ENCODE measurements at regions of chr3 and their contacts with region 1.

Region 1: DNA sequence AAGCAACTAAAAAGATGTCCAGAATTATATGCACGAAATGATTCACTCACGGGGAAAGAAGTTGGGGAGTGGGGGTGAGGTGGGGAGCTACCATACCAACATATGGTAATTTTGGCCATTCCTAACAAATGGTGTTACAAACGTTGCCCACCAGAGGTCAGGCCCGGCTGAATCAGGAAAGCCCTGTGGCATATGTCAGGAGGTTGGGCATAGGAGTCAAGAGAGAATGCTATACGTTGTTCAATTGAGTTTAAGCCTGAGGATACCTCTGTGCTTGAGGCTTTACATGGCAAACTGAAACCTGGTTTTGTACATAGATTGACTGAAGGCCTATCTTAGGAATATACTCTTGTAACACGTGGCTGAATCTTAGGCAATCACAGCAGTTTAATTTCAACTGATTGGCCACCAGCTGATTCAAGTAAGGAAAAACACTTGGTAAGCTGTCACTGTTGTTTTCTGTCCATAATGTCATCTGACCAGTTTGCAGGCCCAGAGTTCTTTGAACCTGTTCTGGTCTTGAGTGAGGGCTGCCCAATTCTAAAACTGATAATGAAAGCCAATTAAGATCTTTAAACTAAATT is 23.4 kb upstream of the SLC2A2 start:
- DNase-seq: peak in 4 of 5 donors; percentile 16 to 40 (median 30)
- ATAC-seq: peak in 3 of 4 donors; percentile 68 to 83 (median 80)
- H3K4me3 ChIP-seq: no peak overlapping the region
- H3K27ac ChIP-seq: no peak overlapping the region
- H3K4me1 ChIP-seq: peaks cover 0 to 2% (median 0%) of the 10 kb centered on the region in 12 donors
- H3K27me3 ChIP-seq: no peaks in the 10 kb centered on the region
- CTCF ChIP-seq: peak; percentile 41 to 68 (median 55)
- POLR2A ChIP-seq: no peak

Region 2: GRCh38 chr3:171561596-171562323 is 511.8 kb after region 1 on chr3:
- intact Hi-C with region 1: loop called (anchors 1 to 5 kb)
- DNase-seq: no peak
- ATAC-seq: no peak
- H3K4me3 ChIP-seq: no peak overlapping the region
- H3K27ac ChIP-seq: no peak overlapping the region
- H3K4me1 ChIP-seq: peaks cover 0 to 26% (median 8%) of the 10 kb centered on the region in 12 donors
- H3K27me3 ChIP-seq: no peaks in the 10 kb centered on the region
- CTCF ChIP-seq: no peak
- POLR2A ChIP-seq: no peak

Measured in heart left ventricle (tissue), 16 donors.